ENCODE measurements at regions of chr10 and their contacts with region 1.

Region 1: DNA sequence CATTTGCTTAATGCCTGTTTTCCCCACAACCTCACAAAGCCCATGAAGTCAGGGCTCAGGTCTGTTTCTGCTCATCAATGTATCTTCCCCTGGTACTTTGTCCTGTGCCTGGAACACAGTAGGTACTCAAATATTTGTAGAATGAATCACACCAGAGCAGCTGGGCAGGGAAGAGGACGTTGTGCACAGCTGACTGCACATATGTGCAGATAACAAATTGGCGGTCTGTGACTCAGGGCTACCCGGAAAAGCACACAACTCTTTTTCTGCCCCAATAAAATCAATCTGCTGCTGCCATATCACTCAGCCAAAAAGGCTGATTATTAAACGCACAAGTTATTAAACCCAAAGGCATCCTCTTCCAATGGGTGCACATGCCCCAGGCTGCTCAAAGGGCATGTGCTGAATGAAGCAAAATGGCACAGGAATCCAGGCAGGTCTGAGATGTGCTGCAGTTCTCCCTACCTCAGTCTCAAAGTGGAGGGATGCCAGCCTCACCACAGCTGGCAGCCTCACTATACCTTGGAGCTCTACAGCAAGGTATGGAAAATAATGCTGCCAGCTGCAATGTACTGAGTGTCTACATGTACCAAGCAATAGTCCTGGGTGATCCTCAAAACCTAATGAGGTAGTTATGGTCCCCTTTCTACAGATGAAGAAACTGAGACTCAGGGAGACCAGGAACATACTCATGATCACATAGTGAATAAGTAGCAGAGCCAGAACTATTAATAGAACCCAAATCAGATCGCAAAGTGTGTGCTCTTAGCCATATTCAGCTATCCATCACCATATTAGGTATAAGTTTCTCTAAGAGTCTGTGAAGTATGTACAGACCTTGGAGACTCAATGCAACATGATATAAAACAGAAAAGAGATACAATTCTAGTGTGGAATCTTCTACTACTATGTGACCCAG is 43.4 kb downstream of the SORBS1 start:
- DNase-seq: peak; percentile 82
- H3K4me3 ChIP-seq: no peak overlapping the region
- H3K27ac ChIP-seq: peak overlapping the region; percentile 77
- H3K4me1 ChIP-seq: peaks cover 52% of the 10 kb centered on the region
- H3K27me3 ChIP-seq: no peaks in the 10 kb centered on the region
- CTCF ChIP-seq: no peak
- POLR2A ChIP-seq: no peak

Region 2: GRCh38 chr10:95467162-95467599 is 50.6 kb before region 1 on chr10:
- CTCF ChIA-PET with region 1: no interaction called
- POLR2A ChIA-PET with region 1: no interaction called
- dilution Hi-C with region 1: no loop called
- intact Hi-C with region 1: no loop called
- DNase-seq: peak; percentile 81
- H3K4me3 ChIP-seq: no peak overlapping the region
- H3K27ac ChIP-seq: no peak overlapping the region
- H3K4me1 ChIP-seq: peaks cover 8% of the 10 kb centered on the region
- H3K27me3 ChIP-seq: peaks cover 0 to 2% of the 10 kb centered on the region in 2 experiments
- CTCF ChIP-seq: peak; percentile 8 to 54
- POLR2A ChIP-seq: no peak

Region 3: GRCh38 chr10:95480102-95480900 is 37.5 kb before region 1 on chr10:
- CTCF ChIA-PET with region 1: interaction called, 5 read pairs
- POLR2A ChIA-PET with region 1: no interaction called
- dilution Hi-C with region 1: no loop called
- intact Hi-C with region 1: loop called (anchors 1 kb)
- DNase-seq: peak; percentile 67
- H3K4me3 ChIP-seq: no peak overlapping the region
- H3K27ac ChIP-seq: peak overlapping the region; percentile 45
- H3K4me1 ChIP-seq: peaks cover 25% of the 10 kb centered on the region
- H3K27me3 ChIP-seq: no peaks in the 10 kb centered on the region
- CTCF ChIP-seq: peak in 1 of 2 donors; percentile 13
- POLR2A ChIP-seq: no peak

Region 4: DNA sequence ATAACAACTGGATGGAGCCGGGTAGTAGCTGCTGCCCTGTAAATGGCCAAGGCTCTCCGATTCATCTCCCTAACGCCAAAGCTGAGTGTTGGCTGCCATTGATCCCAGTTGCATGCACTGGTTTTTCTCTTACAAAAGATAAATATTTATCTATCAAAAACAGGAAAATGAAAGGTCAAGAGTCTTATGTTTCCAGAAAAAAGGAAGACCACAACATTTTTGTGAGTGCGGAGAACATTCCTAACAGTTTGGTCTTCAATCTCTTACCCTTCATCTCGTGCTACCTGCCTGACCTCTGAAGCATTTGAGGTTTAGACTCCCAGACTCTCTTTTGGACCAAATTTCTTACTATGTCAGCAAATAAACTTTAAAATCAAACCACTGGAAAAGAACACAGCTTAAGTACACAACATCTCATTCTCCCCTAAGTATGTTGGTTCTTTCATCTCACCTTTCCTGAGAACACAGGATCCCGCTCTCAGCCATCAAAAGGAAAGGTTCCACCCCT is 18.3 kb before region 1 on chr10:
- CTCF ChIA-PET with region 1: no interaction called
- POLR2A ChIA-PET with region 1: no interaction called
- dilution Hi-C with region 1: no loop called
- intact Hi-C with region 1: loop called (anchors 2 kb)
- DNase-seq: peak; percentile 58
- H3K4me3 ChIP-seq: no peak overlapping the region
- H3K27ac ChIP-seq: peak overlapping the region; percentile 12
- H3K4me1 ChIP-seq: peaks cover 12% of the 10 kb centered on the region
- H3K27me3 ChIP-seq: no peaks in the 10 kb centered on the region
- CTCF ChIP-seq: no peak
- POLR2A ChIP-seq: no peak

Region 5: DNA sequence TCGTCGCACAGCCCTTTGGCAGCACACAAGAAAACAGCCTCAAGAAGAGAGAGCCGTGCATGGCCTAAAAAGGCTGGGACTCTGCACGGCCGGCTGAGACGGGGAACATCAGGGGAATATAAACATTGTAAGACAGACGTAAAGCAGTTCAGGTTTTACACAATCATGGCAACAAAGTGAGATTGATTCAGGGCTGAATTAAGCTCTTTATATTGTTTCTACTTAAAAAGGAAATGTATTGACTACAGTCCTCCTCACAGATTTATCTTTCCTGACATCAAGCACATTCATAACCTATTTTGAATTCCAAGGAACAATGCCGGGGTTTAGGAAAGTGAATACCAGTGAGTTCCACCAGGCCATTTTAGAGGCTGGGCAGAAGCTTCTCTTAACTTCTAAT is 18.2 kb after region 1 on chr10:
- CTCF ChIA-PET with region 1: interaction called, 3 read pairs
- POLR2A ChIA-PET with region 1: no interaction called
- dilution Hi-C with region 1: no loop called
- intact Hi-C with region 1: loop called (anchors 1 kb)
- DNase-seq: peak; percentile 74
- H3K4me3 ChIP-seq: no peak overlapping the region
- H3K27ac ChIP-seq: peak overlapping the region; percentile 14
- H3K4me1 ChIP-seq: peaks cover 28% of the 10 kb centered on the region
- H3K27me3 ChIP-seq: no peaks in the 10 kb centered on the region
- CTCF ChIP-seq: no peak
- POLR2A ChIP-seq: no peak